HEK293 (cell line): ENCODE measurements at regions of chr2 and their contacts with region 1.

Region 1: DNA sequence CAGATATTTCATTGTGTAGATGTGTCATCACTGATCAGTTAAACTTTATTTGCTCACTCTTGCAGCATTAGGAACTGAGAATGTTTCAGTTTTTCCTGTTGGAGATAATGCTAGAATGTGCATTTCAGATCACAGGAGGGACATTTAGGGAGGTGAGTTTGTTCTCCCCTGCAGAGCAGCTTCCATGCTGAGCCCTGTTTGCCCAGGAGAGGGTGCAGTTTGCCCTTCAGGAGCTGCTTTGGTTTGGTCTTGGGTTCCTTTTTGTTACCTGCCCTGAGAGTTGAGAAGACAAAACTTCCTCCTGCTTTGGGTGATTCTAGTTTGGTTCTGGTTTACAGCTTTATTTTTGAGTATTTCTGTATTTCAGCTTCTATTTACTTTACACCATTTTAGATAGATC is 49.9 kb downstream of the DGKD start:
- H3K4me3 ChIP-seq: no peak overlapping the region
- H3K27ac ChIP-seq: no peak overlapping the region
- H3K4me1 ChIP-seq: no peaks in the 10 kb centered on the region; the same call in 1 of the 2 replicates
- CTCF ChIP-seq: no peak

Region 2: DNA sequence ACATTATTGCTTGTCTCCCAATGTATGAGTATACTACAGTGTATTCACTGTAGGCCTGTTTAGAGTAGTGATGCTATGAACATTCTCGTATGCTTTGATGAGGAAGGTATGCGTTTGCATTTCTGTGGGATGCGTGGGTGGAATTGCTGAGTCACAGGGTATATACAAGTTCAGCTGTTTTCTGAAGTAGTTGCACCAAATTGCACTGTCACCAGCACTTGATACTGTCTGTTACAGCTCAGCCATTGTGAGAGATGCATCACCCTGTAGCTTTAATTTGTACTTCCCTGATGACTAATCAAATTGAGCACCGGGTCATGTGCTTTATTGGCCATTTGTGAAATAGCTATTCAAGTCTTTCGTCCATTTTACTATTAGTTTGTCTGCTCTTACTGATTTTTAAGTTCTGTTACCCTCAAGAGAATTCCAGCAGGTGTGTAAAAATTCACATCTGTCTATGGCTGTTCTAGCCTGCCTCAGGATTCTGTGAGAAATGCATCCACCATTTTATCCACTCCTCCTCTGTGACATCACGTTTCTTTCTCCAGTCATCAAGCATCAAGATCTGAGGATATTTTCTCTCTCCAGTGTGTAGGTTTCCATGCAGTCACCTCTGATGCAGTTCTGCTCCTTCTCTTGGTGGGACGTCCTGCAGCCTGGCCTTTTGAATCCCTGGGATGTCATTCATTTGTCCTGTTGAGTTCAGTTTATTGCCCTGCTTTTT is 22.6 kb after region 1 on chr2:
- CTCF ChIA-PET with region 1: no interaction called
- POLR2A ChIA-PET with region 1: no interaction called
- H3K4me3 ChIP-seq: no peak overlapping the region
- H3K27ac ChIP-seq: no peak overlapping the region
- H3K4me1 ChIP-seq: peaks cover under 1% of the 10 kb centered on the region; the same call in 1 of the 2 replicates
- CTCF ChIP-seq: no peak

Region 3: DNA sequence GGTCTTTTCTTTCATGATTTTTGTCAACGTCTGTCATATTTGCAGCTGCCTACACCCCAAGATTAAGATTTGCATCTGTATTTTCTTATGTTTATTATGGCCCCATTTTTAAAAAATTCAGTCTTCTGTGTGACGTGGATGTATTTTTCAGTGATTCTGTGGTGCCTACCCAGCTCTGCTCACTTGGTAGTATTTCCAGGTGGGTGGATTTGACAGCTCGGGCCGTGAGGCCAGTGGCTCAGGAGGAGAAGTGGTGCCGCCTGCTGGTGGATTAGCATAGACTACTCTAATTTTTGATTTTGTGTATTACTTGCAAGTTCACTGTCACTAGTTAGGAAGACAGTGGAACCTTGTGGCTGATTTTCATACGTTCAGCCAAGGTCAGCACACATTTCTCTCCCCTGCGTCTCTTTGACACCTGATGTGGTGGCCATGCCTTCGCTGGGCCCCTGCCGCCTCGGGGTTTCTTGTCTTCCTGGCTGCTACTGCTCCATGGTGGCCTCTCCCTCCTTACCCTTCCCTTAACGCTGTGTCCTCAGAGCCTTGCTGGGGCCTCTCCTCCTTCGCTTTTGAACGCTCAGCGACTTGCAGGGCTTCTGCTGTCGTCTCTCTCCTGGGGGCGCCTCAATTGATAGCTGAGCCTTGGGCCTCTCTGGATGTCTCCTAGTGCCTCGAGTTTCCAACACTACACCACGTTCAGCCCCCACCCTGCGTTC is 39.4 kb after region 1 on chr2:
- CTCF ChIA-PET with region 1: interaction called, 36 read pairs
- POLR2A ChIA-PET with region 1: no interaction called
- H3K4me3 ChIP-seq: no peak overlapping the region
- H3K27ac ChIP-seq: no peak overlapping the region
- H3K4me1 ChIP-seq: no peaks in the 10 kb centered on the region
- CTCF ChIP-seq: peak; percentile 69